ENCODE measurements at regions of chr15 and their contacts with region 1.

Region 1: DNA sequence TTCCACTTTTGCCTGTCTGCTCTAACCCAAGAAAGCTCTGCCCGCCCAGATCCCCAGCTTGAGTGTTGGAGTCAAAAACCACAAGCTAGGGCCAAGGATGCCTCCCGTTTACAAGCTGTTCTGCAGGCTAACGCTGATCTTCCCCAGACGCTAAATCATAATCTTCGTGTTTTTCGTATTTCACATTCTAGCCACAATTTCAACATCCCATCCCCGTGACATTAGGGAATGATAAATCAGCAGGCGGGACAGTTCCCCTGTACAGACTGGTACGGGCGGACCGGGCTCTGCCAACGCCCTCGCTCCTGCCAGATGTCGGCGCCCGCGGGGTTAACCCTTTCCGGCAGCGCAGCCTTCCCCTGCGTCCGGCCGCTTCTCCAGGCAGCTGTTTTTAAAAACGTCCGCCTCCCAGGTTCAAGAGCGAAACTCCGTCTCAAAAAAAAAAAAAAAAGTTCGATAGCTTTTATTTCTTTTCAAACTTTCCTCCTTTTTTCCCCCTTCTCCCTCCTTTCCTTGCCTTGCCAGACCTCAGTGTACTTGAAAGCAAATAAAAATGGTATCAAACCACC is 81.0 kb upstream of the BNC1 start:
- DNase-seq: peak; percentile 32 to 49
- ATAC-seq: peak; percentile 75 to 89
- H3K4me3 ChIP-seq: peak overlapping the region; percentile 39
- H3K27ac ChIP-seq: peak overlapping the region in 1 of 2 experiments; percentile 38; a peak in 4 of 6 replicates
- H3K4me1 ChIP-seq: peaks cover 4% of the 10 kb centered on the region; the same call in 1 of the 3 replicates
- CTCF ChIP-seq: no peak
- EP300 ChIP-seq: no peak
- POLR2A ChIP-seq: no peak
- RAD21 ChIP-seq: no peak

Region 2: DNA sequence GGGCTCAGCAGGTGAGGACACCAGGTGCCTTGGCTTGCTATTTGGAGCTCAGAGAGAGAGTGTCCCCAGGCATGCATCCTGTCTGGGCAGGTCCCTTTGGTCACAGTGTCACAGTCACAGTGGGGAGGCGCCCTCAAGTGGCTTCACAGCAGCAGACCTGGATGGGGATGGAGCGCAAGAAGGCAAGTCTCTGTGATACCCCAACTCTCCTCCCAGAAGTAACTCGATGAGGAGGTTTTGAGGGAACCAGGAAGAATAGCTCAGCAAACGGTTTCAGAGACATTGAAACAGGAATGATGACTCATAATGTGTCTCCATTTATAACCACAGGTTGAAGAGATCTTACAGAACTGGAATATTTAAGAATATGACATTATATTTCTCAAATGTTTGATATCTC is 15.2 kb after region 1 on chr15:
- CTCF ChIA-PET with region 1: interaction called, 25 read pairs
- POLR2A ChIA-PET with region 1: no interaction called
- DNase-seq: peak; percentile 62 to 72
- ATAC-seq: peak; percentile 86 to 90
- H3K4me3 ChIP-seq: no peak overlapping the region
- H3K27ac ChIP-seq: peak overlapping the region; percentile 59 to 64; a peak in 5 of 6 replicates
- H3K4me1 ChIP-seq: peaks cover 20% of the 10 kb centered on the region
- CTCF ChIP-seq: peak; percentile 66
- EP300 ChIP-seq: no peak
- POLR2A ChIP-seq: no peak
- RAD21 ChIP-seq: peak; percentile 76 to 90

Measured in A549 (cell line).